Breast epithelium (tissue), 4 donors: ENCODE measurements at regions of chr13 and their contacts with region 1.

Region 1: DNA sequence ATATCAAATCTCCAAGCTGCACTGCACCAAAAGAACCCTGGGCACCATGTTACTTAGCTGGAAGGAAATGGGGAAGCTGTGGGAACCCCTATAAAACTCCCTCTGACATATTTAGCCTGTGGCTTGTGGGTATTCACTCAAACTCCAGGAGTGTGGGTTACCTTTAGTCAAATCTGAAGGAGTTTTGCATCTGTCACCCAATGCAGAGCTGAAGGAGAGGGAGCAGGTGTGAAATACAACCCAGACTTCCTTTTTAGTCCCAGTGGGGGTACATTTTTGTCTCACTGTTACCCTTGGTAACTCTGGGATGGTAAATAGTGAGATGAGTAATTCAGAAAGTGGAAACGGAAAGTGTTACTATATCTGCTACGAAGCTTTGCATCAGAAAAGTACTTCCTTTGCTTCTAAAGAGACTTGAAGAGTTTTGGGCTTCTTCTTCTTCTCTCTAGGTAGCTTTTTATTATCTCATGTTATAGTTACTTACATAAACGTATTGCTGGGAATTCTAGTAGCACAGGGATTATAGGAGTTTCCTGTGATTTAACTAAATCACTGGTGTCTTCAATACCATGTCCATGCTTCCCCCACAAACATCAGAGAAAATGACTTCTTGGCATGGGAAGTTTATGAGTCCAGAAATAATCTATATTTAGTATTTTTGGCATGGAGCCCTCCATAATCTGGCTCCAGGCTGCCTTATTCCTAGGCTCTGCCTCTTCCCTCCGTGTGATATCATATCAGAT is 105.9 kb downstream of the AKAP11 start:
- DNase-seq: no peak
- H3K4me3 ChIP-seq: no peak overlapping the region
- H3K27ac ChIP-seq: no peak overlapping the region
- H3K4me1 ChIP-seq: no peaks in the 10 kb centered on the region
- H3K27me3 ChIP-seq: no peaks in the 10 kb centered on the region
- CTCF ChIP-seq: no peak
- POLR2A ChIP-seq: no peak

Region 2: GRCh38 chr13:42258747-42259146 is 119.1 kb before region 1 on chr13:
- intact Hi-C with region 1: loop called (anchors 5 kb)
- DNase-seq: no peak
- H3K4me3 ChIP-seq: no peak overlapping the region
- H3K27ac ChIP-seq: no peak overlapping the region
- H3K4me1 ChIP-seq: no peaks in the 10 kb centered on the region
- H3K27me3 ChIP-seq: no peaks in the 10 kb centered on the region
- CTCF ChIP-seq: no peak
- POLR2A ChIP-seq: no peak

Region 3: DNA sequence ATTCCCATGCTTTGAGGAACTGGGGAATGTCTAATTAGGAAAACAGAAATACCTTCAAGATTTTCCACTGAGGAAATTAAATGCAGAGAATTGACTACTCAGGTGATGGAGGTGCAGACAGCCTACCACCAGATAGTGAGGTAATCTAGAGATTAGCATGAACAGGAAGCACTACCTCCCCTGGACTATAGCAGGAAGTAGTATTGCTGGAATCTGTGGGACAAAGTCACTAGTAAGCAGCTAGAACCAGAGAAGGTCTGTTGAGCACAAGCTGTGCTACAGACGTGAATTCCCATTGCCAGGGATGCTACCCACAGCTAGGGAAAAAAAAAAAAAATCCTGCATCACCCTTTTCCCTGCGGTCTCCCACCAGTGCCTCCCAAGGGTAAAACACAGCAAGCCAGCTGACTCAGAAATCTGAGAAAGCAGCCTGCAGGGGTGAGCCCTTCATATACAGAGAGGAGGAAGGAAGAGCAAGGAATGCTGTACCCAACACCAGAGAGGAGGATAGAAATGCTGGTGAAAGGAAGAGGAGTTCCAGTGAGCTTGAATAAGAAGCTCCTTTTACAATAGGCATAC is 1398.8 kb after region 1 on chr13:
- intact Hi-C with region 1: loop called (anchors 5 kb)
- DNase-seq: no peak
- H3K4me3 ChIP-seq: no peak overlapping the region
- H3K27ac ChIP-seq: no peak overlapping the region
- H3K4me1 ChIP-seq: no peaks in the 10 kb centered on the region
- H3K27me3 ChIP-seq: no peaks in the 10 kb centered on the region
- CTCF ChIP-seq: no peak
- POLR2A ChIP-seq: no peak